Head of caudate nucleus (tissue), 42 donors: ENCODE measurements at regions of chr5 and their contacts with region 1.

Region 1: DNA sequence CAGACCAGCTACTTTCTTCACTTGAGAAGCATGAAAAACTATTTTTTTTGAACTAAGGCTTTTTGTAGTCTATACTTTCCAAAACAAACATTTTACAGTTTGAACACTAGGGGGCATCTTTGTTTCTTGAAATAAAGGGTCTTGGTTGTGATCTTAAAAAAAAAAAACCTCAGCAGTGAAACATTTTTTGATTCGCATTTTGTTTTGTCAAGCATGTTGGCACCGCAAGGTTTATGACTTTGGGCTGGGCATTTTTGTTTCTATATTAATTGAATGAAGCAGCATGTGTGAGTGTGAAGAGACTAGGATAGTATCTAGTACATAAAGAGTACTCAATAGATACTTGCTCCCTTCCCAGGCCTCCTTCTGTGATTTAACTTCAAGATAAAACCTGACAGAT is 31.6 kb upstream of the ACOT12 start:
- DNase-seq: peak in 1 of 42 donors; percentile 13

Region 2: DNA sequence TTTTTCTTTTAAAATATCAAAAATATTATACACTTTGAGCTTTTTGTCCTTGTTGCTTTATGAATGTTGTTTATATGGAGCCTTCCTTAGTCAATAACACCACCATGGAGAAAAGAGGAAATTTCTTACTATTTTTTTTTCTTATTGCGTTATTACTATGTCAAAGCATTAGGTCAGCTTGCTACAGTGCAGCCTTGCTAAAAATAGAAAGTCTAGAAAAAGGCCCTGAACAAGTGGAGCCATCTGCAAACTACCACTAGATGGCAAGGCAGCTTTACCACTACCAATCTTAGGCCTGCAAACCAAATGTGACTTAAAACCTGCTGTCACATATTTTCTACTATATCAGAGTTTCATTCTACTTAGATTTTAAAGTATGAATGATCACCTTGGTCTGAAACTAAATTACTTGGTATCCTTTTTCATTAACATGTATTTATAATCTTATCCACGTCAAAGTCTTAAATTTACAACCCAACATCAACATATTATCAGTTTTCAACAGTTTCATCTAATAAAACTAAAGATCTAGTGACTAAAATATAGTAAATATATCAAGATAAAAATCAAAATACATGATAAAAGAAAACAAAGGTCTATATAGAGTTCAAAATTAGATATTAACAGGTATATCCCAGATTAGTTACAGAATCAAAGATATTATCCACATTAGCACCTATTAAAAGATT is 81.5 kb after region 1 on chr5:
- intact Hi-C with region 1: loop called (anchors 5 kb)
- DNase-seq: peak in 36 of 42 donors; percentile 13 to 88 (median 61)